BJ (cell line): ENCODE measurements at regions of chr17 and their contacts with region 1.

Region 1: DNA sequence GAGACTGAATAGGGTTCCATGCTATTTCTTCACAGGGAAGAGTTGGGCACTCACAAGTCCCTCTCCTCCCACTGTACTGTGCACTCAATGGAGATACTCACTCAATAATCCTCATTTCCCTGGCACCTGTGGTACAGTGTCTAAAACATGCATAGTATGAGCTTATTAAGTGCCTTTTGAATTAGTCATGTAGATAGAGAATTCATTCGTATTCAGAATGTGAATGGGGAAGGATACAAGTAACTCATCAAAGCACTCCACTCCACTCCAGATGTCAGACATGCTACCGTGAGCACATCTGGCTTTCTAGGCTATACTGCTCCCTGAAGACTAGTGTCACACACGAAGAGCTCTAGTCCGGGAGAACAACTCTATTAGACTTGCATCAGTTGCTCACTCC is 6.3 kb downstream of the C17orf75 start:
- DNase-seq: peak; percentile 71
- H3K4me3 ChIP-seq: no peak overlapping the region
- H3K27me3 ChIP-seq: no peaks in the 10 kb centered on the region
- CTCF ChIP-seq: no peak

Region 2: GRCh38 chr17:32319548-32319905 is 16.2 kb before region 1 on chr17:
- CTCF ChIA-PET with region 1: interaction called, 12 read pairs
- POLR2A ChIA-PET with region 1: no interaction called
- DNase-seq: no peak
- H3K4me3 ChIP-seq: no peak overlapping the region
- H3K27me3 ChIP-seq: peaks cover 2% of the 10 kb centered on the region; the same call in 1 of the 2 replicates
- CTCF ChIP-seq: peak; percentile 99

Region 3: DNA sequence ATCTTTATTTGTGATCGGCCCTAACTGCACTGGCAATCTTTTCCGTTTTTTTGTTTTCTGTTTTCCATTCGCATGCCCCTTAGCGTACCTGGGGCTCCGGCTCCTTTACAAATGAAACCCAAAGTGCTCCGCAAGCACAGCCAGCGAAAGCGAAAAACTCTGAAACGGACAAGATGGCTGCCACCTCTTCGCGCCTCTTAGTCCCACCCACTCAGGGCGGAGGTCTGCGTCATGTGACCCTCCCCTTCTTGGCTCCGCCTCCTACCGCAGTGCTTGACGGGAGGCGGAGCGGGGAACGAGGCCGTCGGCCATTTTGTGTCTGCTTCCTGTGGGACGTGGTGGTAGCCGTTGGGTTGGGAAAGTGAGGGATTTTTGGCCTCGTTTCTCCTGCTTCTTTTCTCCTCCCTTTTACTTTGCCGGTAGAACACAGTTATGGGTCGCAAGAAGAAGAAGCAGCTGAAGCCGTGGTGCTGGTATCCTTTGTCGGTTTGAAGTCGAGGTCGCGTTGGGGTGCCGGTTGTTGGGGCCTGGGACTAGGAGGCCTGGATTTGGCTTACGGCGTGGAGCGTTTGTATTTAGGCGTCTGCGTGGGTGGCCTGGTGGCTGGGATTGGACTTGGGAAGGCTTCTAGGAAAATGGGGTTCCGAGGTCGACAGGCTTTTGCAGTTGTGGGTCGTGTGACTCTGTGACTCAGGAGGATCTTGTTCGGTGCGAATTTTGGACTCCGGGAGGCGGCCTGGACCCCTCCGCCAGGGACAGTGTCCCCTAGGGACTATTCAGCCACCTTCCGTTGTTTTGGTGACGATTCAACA is 14.4 kb after region 1 on chr17 and contains the start of gene ZNF207:
- CTCF ChIA-PET with region 1: interaction called, 3 read pairs
- POLR2A ChIA-PET with region 1: interaction called, 18 read pairs
- DNase-seq: peak; percentile 77
- H3K4me3 ChIP-seq: peak within 1 kb of the TSS; percentile 87
- H3K27me3 ChIP-seq: no peaks in the 10 kb centered on the region
- CTCF ChIP-seq: peak; percentile 8; the same call in 1 of the 2 replicates
- polyA plus RNA-seq, gene ZNF207: 165 and 179 TPM in 2 replicates